ENCODE measurements at regions of chr12 and their contacts with region 1.

Region 1: GRCh38 chr12:46131729-46132469 is 136.9 kb downstream of the SLC38A1 start:
- DNase-seq: no peak
- ATAC-seq: no peak
- H3K4me3 ChIP-seq: no peak overlapping the region
- H3K27ac ChIP-seq: no peak overlapping the region
- H3K4me1 ChIP-seq: no peaks in the 10 kb centered on the region
- H3K27me3 ChIP-seq: peaks cover 3% of the 10 kb centered on the region
- CTCF ChIP-seq: 0 out of 2 replicates have a peak, but pooled peaks have one; percentile 9
- POLR2A ChIP-seq: no peak
- RAD21 ChIP-seq: no peak

Region 2: GRCh38 chr12:46148326-46149078 is 16.6 kb after region 1 on chr12:
- CTCF ChIA-PET with region 1: no interaction called
- POLR2A ChIA-PET with region 1: no interaction called
- dilution Hi-C with region 1: no loop called
- in situ Hi-C with region 1: no loop called
- intact Hi-C with region 1: no loop called
- DNase-seq: no peak
- ATAC-seq: no peak
- H3K4me3 ChIP-seq: no peak overlapping the region
- H3K27ac ChIP-seq: no peak overlapping the region
- H3K4me1 ChIP-seq: no peaks in the 10 kb centered on the region
- H3K27me3 ChIP-seq: peaks cover 3% of the 10 kb centered on the region; the same call in 1 of the 2 replicates
- CTCF ChIP-seq: no peak
- POLR2A ChIP-seq: no peak
- RAD21 ChIP-seq: no peak

Region 3: GRCh38 chr12:46174919-46175318 is 43.0 kb after region 1 on chr12:
- CTCF ChIA-PET with region 1: no interaction called
- POLR2A ChIA-PET with region 1: no interaction called
- dilution Hi-C with region 1: no loop called
- in situ Hi-C with region 1: no loop called
- intact Hi-C with region 1: loop called (anchors 1 kb)
- DNase-seq: no peak
- ATAC-seq: no peak
- H3K4me3 ChIP-seq: no peak overlapping the region
- H3K27ac ChIP-seq: no peak overlapping the region
- H3K4me1 ChIP-seq: no peaks in the 10 kb centered on the region
- H3K27me3 ChIP-seq: no peaks in the 10 kb centered on the region
- CTCF ChIP-seq: no peak
- POLR2A ChIP-seq: no peak
- RAD21 ChIP-seq: no peak

Measured in IMR-90 (cell line).